ENCODE measurements at regions of chr7 and their contacts with region 1.

Region 1: DNA sequence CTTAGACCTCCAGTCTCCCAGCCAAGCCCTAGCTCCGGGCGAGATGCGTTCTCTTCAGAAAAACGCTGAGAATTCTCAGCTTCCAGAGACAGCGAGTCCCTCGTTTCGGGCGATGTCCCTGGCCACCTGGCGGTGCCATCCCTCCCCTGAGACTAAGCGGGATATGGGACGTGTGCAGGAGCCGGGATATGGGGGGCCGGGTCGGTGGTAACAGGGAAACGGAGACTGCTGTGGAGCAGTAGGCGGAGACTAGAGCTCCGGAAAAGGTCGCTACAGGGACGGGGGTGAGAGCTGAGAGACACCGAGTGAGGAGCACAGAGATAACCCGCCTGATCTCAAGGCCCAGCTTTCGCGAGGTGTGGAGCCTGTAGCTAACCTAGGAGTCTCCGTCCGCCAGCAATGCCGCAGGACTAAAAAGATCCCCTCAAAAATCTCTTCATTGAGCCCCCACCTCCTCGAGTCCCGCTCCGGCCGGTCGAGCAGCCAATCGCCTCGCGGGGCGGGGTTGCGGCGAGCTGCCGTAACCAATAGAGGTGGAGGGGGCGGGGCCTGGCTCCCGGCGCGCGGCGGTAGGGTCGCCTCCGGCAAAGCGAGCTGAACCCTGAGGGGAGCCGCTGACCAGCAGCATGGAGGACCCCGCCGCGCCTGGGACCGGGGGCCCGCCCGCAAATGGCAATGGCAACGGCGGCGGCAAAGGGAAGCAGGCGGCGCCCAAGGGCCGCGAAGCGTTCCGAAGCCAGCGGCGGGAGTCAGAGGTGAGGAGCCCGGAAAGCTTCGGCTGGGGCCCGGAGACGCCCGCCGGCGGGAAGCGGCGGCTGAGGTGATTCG is at the start of gene STRIP2:
- DNase-seq: peak; percentile 94
- H3K4me3 Mint-ChIP-seq: peak within 1 kb of the TSS; percentile 89
- H3K27ac Mint-ChIP-seq: peak within 1 kb of the TSS; percentile 92
- H3K4me1 Mint-ChIP-seq: peaks cover 28% of the 10 kb centered on the region
- H3K27me3 Mint-ChIP-seq: peaks cover 7% of the 10 kb centered on the region
- total RNA-seq, gene STRIP2: 71.4 to 76.0 TPM

Region 2: GRCh38 chr7:129224251-129225205 is 209.5 kb before region 1 on chr7 and contains the start of gene AHCYL2:
- CTCF ChIA-PET with region 1: no interaction called
- intact Hi-C with region 1: loop called (anchors 2 kb)
- DNase-seq: peak; percentile 99
- H3K4me3 Mint-ChIP-seq: peak within 1 kb of the TSS; percentile 88
- H3K27ac Mint-ChIP-seq: peak within 1 kb of the TSS; percentile 90
- H3K4me1 Mint-ChIP-seq: peaks cover 31% of the 10 kb centered on the region
- H3K27me3 Mint-ChIP-seq: no peaks in the 10 kb centered on the region
- total RNA-seq, gene AHCYL2: 29.1 to 30.4 TPM

Region 3: DNA sequence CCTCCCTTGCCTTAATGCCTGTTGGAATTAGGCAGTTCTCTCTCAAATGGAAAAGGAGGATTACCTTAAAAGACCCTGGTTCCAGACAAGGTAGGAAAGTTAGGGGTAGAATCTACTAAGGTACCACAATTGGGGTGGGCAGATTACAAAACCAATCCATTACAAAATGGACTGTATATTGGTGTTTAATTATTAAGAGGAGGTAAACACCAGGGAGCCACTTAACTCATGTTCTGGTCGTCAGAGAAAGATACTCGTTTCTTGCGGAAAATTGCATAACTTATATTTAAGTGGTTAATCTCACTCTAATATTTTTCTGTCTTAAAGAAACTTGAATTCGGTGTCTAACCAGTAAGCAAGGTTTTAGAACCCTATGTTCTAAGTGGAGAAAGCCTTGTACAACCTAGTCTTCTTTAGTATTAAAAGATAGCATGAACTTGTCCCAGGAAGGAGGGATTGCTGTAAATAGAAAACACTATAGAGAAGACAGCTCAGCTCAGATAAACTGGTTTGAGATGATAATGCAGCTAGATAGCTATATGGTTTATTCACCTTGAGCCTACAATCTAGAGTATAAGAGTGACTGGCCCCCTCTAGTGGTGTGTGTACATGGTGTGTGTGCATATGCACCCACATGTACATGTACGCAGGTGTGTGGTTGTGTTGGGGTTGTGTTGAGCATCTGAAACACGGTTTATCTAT is 57.8 kb before region 1 on chr7:
- CTCF ChIA-PET with region 1: interaction called, 14 read pairs
- intact Hi-C with region 1: loop called (anchors 2 kb)
- DNase-seq: peak; percentile 86
- H3K4me3 Mint-ChIP-seq: no peak overlapping the region
- H3K27ac Mint-ChIP-seq: no peak overlapping the region
- H3K4me1 Mint-ChIP-seq: peaks cover 49% of the 10 kb centered on the region
- H3K27me3 Mint-ChIP-seq: no peaks in the 10 kb centered on the region

Region 4: GRCh38 chr7:129468087-129468486 is 34.0 kb after region 1 on chr7:
- CTCF ChIA-PET with region 1: interaction called, 8 read pairs
- intact Hi-C with region 1: loop called (anchors 1 kb)
- DNase-seq: no peak
- H3K4me3 Mint-ChIP-seq: no peak overlapping the region
- H3K27ac Mint-ChIP-seq: no peak overlapping the region
- H3K4me1 Mint-ChIP-seq: peaks cover 12% of the 10 kb centered on the region
- H3K27me3 Mint-ChIP-seq: no peaks in the 10 kb centered on the region

Region 5: GRCh38 chr7:129502376-129502776 is 68.3 kb after region 1 on chr7 and contains the start of gene SMKR1:
- CTCF ChIA-PET with region 1: no interaction called
- intact Hi-C with region 1: no loop called
- DNase-seq: peak; percentile 86
- H3K4me3 Mint-ChIP-seq: peak within 1 kb of the TSS; percentile 75
- H3K27ac Mint-ChIP-seq: no peak within 1 kb of the TSS
- H3K4me1 Mint-ChIP-seq: peaks cover 9% of the 10 kb centered on the region
- H3K27me3 Mint-ChIP-seq: no peaks in the 10 kb centered on the region
- total RNA-seq, gene SMKR1: 0.99 to 1.2 TPM

Region 6: DNA sequence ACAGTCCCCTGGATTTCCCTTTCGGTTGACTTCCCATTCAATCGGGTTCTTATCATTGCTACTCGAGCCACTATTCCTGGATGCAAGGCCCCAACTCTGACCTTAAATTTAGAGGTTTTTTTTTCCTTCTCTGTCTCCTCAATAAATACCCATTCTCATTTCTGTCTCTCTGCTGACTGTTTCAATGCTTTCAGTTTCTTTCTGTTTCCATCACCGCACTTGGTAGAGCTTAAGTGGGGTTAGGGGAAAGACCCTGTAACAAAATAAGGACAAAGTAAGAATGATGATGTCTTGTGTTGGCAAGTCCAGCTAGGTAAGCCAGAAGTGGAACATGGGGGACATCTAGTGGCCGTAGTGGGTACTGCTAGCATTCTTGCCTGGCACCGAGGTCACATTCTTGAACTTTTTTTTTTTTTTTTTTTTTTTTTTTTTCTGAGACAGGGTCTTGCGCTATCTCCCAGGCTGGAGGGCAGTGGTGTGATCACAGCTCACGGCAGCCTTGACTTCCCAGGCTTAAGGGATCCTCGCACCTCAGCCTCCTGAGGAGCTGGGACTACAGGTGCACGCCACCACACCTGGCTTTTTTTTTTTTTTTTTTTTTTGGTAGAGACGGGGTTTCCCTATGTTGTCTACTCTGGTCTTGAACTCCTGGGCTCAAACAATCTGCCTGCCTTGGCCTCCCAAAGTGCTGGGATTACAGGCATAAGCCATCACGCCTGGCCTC is 576.8 kb after region 1 on chr7:
- CTCF ChIA-PET with region 1: no interaction called
- intact Hi-C with region 1: loop called (anchors 1 kb)
- DNase-seq: peak; percentile 98
- H3K4me3 Mint-ChIP-seq: no peak overlapping the region
- H3K27ac Mint-ChIP-seq: peak overlapping the region; percentile 64
- H3K4me1 Mint-ChIP-seq: peaks cover 13% of the 10 kb centered on the region
- H3K27me3 Mint-ChIP-seq: no peaks in the 10 kb centered on the region

Region 7: GRCh38 chr7:130649004-130649790 is 1215.1 kb after region 1 on chr7:
- CTCF ChIA-PET with region 1: no interaction called
- intact Hi-C with region 1: loop called (anchors 10 kb)
- DNase-seq: peak; percentile 53
- H3K4me3 Mint-ChIP-seq: no peak overlapping the region
- H3K27ac Mint-ChIP-seq: peak overlapping the region; percentile 79
- H3K4me1 Mint-ChIP-seq: peaks cover 29% of the 10 kb centered on the region
- H3K27me3 Mint-ChIP-seq: no peaks in the 10 kb centered on the region